H1 (cell line): ENCODE measurements at regions of chr2 and their contacts with region 1.

Region 1: GRCh38 chr2:47272031-47272864 is 117.1 kb upstream of the STPG4 start:
- DNase-seq: peak in 1 of 2 experiments; percentile 96
- H3K4me3 ChIP-seq: peak overlapping the region in 3 of 4 experiments; percentile 3 to 56 (median 12); a peak in 3 of 8 replicates
- H3K27ac ChIP-seq: no peak overlapping the region
- H3K4me1 ChIP-seq: peaks cover 0 to 4% (median 0%) of the 10 kb centered on the region in 4 experiments; a peak in 4 of 7 replicates
- H3K27me3 ChIP-seq: no peaks in the 10 kb centered on the region; a peak in 1 of 7 replicates
- CTCF ChIP-seq: peak; percentile 87 to 97 (median 91)
- EP300 ChIP-seq: no peak
- POLR2A ChIP-seq: no peak
- RAD21 ChIP-seq: peak; percentile 84 to 85

Region 2: GRCh38 chr2:47250630-47251403 is 21.4 kb before region 1 on chr2:
- CTCF ChIA-PET with region 1: interaction called, 10 read pairs
- POLR2A ChIA-PET with region 1: interaction called, 3 read pairs
- DNase-seq: no peak
- H3K4me3 ChIP-seq: no peak overlapping the region
- H3K27ac ChIP-seq: no peak overlapping the region
- H3K4me1 ChIP-seq: peaks cover 0 to 5% (median 1%) of the 10 kb centered on the region in 4 experiments; a peak in 4 of 7 replicates
- H3K27me3 ChIP-seq: no peaks in the 10 kb centered on the region
- CTCF ChIP-seq: no peak
- EP300 ChIP-seq: no peak
- POLR2A ChIP-seq: no peak
- RAD21 ChIP-seq: no peak

Region 3: DNA sequence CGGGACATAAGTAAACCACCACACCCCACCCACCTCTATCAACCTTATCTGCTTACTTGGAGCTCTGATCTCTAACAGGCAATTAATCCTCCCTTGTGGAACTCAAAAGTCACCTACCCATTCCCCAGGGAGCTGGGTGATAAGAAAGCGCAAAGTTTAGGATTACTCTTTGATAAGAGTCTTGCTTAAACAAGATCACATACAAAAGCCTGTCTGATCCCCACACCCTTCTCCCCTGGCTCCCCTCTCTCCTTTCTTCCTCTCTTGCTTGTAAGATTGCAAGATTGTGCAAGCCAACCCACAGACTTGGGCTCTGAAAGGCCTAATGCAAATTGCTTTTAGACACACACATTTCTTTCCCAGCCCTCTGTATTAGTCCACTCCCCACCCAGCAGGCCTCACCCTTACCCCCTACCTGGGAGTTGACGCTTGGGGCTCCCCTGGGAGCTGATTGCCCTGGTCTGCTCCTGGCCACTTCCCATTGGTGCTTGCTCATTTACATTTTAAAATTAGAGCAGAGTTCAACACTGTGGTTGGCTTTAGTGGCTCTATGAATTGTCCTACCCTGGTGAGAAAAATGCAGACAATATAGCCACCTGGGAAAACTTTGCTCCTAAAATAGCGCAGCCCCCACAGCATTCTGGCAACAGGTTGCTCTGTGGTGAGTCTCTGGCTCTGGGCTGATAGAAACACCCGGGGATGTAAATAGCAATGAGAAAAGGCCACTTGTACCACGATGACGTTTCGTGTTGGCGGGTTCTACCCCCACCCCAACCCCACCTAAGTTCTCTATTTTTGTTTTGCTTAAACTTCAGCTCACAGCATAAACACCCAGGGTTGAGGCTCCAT is 37.9 kb after region 1 on chr2:
- CTCF ChIA-PET with region 1: interaction called, 16 read pairs
- POLR2A ChIA-PET with region 1: no interaction called
- DNase-seq: no peak
- H3K4me3 ChIP-seq: no peak overlapping the region
- H3K27ac ChIP-seq: no peak overlapping the region
- H3K4me1 ChIP-seq: peaks cover 0 to 13% (median 10%) of the 10 kb centered on the region in 4 experiments; a peak in 6 of 7 replicates
- H3K27me3 ChIP-seq: no peaks in the 10 kb centered on the region
- CTCF ChIP-seq: no peak
- EP300 ChIP-seq: no peak
- POLR2A ChIP-seq: no peak
- RAD21 ChIP-seq: no peak

Region 4: DNA sequence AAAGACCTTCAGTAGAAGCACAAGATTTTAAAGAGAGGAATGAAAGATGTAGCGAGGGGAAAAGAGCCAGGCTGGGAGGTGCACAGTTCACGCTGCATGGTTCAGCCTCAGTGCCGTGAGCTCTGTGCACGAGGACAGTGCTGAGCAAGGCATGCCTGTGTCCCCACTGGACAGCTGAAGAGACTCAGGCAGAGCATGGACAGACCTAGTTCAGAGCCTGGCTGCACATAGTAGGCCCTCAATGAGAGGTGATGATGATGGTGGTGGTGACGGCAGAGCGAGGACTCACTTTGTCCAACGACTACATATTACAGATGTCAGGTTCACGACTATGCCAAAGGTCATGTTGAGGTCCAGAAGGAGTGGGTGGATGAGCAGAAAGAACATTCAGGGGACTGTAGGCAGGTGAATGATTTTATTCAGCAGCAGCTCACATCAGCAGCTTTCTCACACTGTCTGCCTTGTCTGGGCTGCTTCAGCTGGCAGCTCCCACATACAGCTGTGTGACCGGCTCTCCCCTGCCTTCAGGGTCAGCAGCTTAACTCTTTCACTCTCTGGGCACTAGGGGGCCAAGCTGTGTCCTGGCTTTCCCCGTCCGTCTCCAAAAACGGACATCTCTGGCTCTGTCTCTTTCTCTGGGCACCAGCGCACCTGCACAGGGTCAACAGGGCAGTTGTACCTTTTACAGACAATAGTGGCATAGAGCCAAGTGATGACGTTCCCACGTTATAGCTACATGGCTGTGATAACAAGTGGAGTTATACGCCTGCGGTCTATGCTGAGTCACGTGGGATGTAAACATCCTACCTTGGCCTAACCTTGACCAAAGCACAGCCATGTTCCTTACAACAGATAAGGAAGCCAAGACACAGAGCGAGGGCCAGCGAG is 381.9 kb after region 1 on chr2:
- CTCF ChIA-PET with region 1: no interaction called
- POLR2A ChIA-PET with region 1: no interaction called
- DNase-seq: peak in 1 of 2 experiments; percentile 68
- H3K4me3 ChIP-seq: no peak overlapping the region
- H3K27ac ChIP-seq: no peak overlapping the region
- H3K4me1 ChIP-seq: peaks cover 9 to 19% (median 17%) of the 10 kb centered on the region in 4 experiments
- H3K27me3 ChIP-seq: no peaks in the 10 kb centered on the region; a peak in 2 of 7 replicates
- CTCF ChIP-seq: peak; percentile 61 to 83 (median 73)
- EP300 ChIP-seq: no peak
- POLR2A ChIP-seq: no peak
- RAD21 ChIP-seq: peak; percentile 58 to 70